ENCODE measurements at regions of chr13 and their contacts with region 1.

Region 1: DNA sequence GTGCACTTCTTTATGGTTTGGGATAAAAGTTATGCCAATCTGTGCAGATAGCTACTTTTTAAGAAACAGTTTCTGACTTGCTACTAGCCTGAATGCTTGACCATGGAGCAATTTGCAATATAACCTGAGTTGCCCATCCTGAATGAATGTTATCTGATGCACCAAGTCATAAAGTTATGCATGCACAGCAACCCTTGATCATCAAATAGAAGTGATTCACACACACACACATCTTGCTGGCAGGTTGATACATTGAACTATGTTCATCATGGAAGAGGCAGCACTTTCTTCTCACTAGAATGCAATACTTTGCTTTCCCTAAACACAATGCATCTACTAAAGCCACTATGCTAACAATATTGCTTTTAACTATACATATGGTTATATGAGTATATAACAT is 311.5 kb downstream of the RFC3 start:
- H3K4me3 ChIP-seq: no peak overlapping the region
- H3K27ac ChIP-seq: no peak overlapping the region
- H3K4me1 ChIP-seq: no peaks in the 10 kb centered on the region
- CTCF ChIP-seq: no peak

Region 2: GRCh38 chr13:34153428-34154180 is 24.2 kb after region 1 on chr13:
- CTCF ChIA-PET with region 1: interaction called, 10 read pairs
- POLR2A ChIA-PET with region 1: no interaction called
- H3K4me3 ChIP-seq: no peak overlapping the region
- H3K27ac ChIP-seq: no peak overlapping the region
- H3K4me1 ChIP-seq: peaks cover 8% of the 10 kb centered on the region; the same call in 1 of the 2 replicates
- CTCF ChIP-seq: no peak

Measured in HEK293 (cell line).